ENCODE measurements at regions of chr14 and their contacts with region 1.

Region 1: GRCh38 chr14:24195191-24196070 is at the start of gene TM9SF1:
- DNase-seq: peak; percentile 93
- ATAC-seq: peak; percentile 94
- H3K4me3 ChIP-seq: peak within 1 kb of the TSS; percentile 79 to 91 (median 85)
- H3K27ac ChIP-seq: peak within 1 kb of the TSS; percentile 84
- H3K4me1 ChIP-seq: peaks cover 65% of the 10 kb centered on the region
- H3K27me3 ChIP-seq: no peaks in the 10 kb centered on the region; a peak in 1 of 5 replicates
- CTCF ChIP-seq: peak; percentile 54
- EP300 ChIP-seq: peak; percentile 7 to 39; a peak in 1 of 4 replicates
- POLR2A ChIP-seq: peak in 1 of 2 experiments; percentile 81; a peak in 2 of 4 replicates
- RAD21 ChIP-seq: peak; percentile 52
- total RNA-seq, gene TM9SF1: 56.4 and 110 TPM in 2 replicates

Region 2: DNA sequence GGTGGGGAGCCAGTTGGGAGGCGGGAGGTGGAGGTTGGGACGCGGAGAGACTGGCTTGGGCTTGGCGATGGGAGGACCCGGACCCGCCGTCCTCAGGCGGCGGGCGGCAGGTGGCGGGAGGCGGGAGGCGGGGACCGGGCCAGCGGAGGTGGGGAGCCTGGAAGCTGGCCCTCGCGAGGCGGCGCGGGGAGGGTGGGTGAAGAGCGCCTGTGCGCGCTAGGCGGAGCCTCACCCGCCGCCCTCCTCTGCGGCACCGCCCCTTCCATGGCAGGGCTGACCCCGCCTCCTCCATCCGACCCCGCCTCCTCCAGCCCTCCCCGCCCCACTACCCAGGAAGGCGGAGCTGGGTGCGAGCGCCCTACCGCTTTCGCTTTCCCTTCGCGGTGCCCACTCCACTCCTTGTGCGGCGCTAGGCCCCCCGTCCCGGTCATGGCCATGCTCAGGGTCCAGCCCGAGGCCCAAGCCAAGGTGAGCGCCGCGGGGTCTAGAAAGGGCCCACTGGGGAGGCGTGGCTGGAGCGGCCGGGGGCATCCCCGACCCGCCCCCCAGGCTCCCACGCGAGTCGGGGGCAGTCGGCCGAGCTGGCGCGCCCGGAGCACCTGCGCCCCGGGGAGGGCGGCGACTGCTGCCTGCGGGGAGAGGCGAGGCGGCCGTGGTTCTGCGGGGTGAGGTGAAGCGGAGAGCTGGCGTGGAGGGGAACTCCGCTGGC is 59.4 kb before region 1 on chr14 and contains the start of gene PSME1:
- CTCF ChIA-PET with region 1: no interaction called
- POLR2A ChIA-PET with region 1: interaction called, 38 read pairs
- in situ Hi-C with region 1: no loop called
- intact Hi-C with region 1: no loop called
- DNase-seq: peak; percentile 93
- ATAC-seq: peak; percentile 86
- H3K4me3 ChIP-seq: peak within 1 kb of the TSS; percentile 91 to 98 (median 93)
- H3K27ac ChIP-seq: peak within 1 kb of the TSS; percentile 75
- H3K4me1 ChIP-seq: peaks cover 64% of the 10 kb centered on the region
- H3K27me3 ChIP-seq: no peaks in the 10 kb centered on the region; a peak in 1 of 5 replicates
- CTCF ChIP-seq: peak; percentile 47; the same call in 1 of the 2 replicates
- EP300 ChIP-seq: peak; percentile 23 to 43; a peak in 1 of 4 replicates
- POLR2A ChIP-seq: peak in 1 of 2 experiments; percentile 31; a peak in 1 of 4 replicates
- RAD21 ChIP-seq: peak; percentile 71
- total RNA-seq, gene PSME1: 608 and 713 TPM in 2 replicates

Region 3: GRCh38 chr14:24179961-24180796 is 15.3 kb before region 1 on chr14:
- CTCF ChIA-PET with region 1: no interaction called
- POLR2A ChIA-PET with region 1: interaction called, 65 read pairs
- in situ Hi-C with region 1: no loop called
- intact Hi-C with region 1: no loop called
- DNase-seq: no peak
- ATAC-seq: no peak
- H3K4me3 ChIP-seq: no peak overlapping the region
- H3K27ac ChIP-seq: no peak overlapping the region
- H3K4me1 ChIP-seq: no peaks in the 10 kb centered on the region
- H3K27me3 ChIP-seq: no peaks in the 10 kb centered on the region
- CTCF ChIP-seq: no peak
- EP300 ChIP-seq: no peak
- POLR2A ChIP-seq: no peak
- RAD21 ChIP-seq: no peak

Region 4: DNA sequence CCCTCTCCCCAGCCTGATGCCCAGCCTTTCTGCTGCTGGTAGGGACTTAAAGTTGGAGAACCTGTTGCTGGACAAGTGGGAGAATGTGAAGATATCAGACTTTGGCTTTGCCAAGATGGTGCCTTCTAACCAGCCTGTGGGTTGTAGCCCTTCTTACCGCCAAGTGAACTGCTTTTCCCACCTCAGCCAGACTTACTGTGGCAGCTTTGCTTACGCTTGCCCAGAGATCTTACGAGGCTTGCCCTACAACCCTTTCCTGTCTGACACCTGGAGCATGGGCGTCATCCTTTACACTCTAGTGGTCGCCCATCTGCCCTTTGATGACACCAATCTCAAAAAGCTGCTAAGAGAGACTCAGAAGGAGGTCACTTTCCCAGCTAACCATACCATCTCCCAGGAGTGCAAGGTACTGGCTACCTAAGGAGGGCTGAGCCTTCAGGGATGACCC is 11.7 kb after region 1 on chr14:
- CTCF ChIA-PET with region 1: no interaction called
- POLR2A ChIA-PET with region 1: interaction called, 230 read pairs
- in situ Hi-C with region 1: no loop called
- intact Hi-C with region 1: no loop called
- DNase-seq: no peak
- ATAC-seq: no peak; the same call in 2 of the 3 replicates
- H3K4me3 ChIP-seq: no peak overlapping the region
- H3K27ac ChIP-seq: no peak overlapping the region
- H3K4me1 ChIP-seq: peaks cover 9% of the 10 kb centered on the region
- H3K27me3 ChIP-seq: no peaks in the 10 kb centered on the region
- CTCF ChIP-seq: no peak
- EP300 ChIP-seq: no peak
- POLR2A ChIP-seq: no peak
- RAD21 ChIP-seq: no peak

Measured in HepG2 (cell line).